Common myeloid progenitor, CD34-positive (primary cell): ENCODE measurements at regions of chr19 and their contacts with region 1.

Region 1: GRCh38 chr19:58519355-58520256 is at the start of gene ZBTB45:
- DNase-seq: peak; percentile 97
- H3K4me3 ChIP-seq: peak within 1 kb of the TSS; percentile 77 to 94 (median 83)
- H3K27ac ChIP-seq: peak within 1 kb of the TSS; percentile 82 to 91
- H3K4me1 ChIP-seq: peaks cover 0 to 35% (median 31%) of the 10 kb centered on the region in 4 experiments
- H3K27me3 ChIP-seq: no peaks in the 10 kb centered on the region

Region 2: GRCh38 chr19:58536852-58537798 is 17.5 kb after region 1 on chr19:
- CTCF ChIA-PET with region 1: interaction called, 41 read pairs
- POLR2A ChIA-PET with region 1: interaction called, 6 read pairs
- DNase-seq: no peak
- H3K4me3 ChIP-seq: peak overlapping the region in 1 of 7 experiments; percentile 77
- H3K27ac ChIP-seq: no peak overlapping the region
- H3K4me1 ChIP-seq: peaks cover 0 to 19% (median 16%) of the 10 kb centered on the region in 4 experiments
- H3K27me3 ChIP-seq: no peaks in the 10 kb centered on the region

Region 3: GRCh38 chr19:58543826-58544590 is 24.4 kb after region 1 on chr19 and contains the start of gene TRIM28:
- CTCF ChIA-PET with region 1: interaction called, 19 read pairs
- POLR2A ChIA-PET with region 1: interaction called, 16 read pairs
- DNase-seq: peak; percentile 99 to 100 (median 100)
- H3K4me3 ChIP-seq: peak within 1 kb of the TSS; percentile 88 to 99 (median 92)
- H3K27ac ChIP-seq: peak within 1 kb of the TSS; percentile 66 to 91
- H3K4me1 ChIP-seq: peaks cover 13 to 29% (median 24%) of the 10 kb centered on the region in 4 experiments
- H3K27me3 ChIP-seq: no peaks in the 10 kb centered on the region

Region 4: DNA sequence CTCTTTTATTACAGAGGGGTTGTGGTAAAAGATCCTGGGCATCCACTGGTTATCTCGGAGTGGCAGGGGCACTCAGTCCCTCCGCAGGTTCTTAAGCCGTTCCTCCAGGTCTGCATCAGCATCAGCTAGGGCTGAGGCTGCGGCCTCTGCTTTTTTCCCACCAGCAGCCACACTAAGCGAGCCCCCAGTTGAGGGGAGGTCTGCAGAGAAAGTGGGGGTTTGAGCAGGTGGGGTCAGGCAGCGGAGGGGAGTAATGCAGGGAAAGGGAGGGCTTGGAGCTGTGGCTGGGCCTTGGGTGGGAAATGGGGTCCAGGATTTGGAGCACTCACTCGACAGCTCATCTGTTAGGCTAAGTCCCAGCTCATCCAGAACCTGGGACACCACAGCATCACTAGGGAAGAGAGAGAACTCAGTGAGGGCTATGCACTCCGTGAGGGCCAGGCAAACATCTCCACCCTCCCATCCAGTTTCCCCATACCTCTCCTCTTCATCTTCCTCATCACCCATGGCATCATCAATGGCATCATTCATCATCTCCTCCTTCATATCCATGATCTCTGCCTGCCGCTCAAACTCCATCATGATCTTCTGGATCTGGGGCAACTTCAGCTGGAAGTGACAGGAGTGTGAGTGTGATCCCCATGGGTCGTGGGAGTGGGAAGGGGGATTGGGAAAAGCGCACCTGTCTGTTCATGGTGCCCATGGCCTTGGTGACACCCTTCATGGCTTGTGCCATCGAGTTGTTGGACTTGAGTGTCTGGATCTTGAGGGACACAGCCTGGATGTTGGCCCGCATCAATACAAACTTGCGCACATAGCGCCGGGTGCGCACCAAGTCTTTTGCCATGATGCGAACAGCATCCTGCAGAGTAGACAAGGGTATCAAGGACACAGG is 32.2 kb after region 1 on chr19:
- CTCF ChIA-PET with region 1: interaction called, 59 read pairs
- POLR2A ChIA-PET with region 1: interaction called, 24 read pairs
- DNase-seq: no peak
- H3K4me3 ChIP-seq: no peak overlapping the region
- H3K27ac ChIP-seq: no peak overlapping the region
- H3K4me1 ChIP-seq: peaks cover 2 to 35% (median 33%) of the 10 kb centered on the region in 4 experiments
- H3K27me3 ChIP-seq: no peaks in the 10 kb centered on the region

Region 5: GRCh38 chr19:58558623-58559274 is 39.1 kb after region 1 on chr19:
- CTCF ChIA-PET with region 1: interaction called, 59 read pairs
- POLR2A ChIA-PET with region 1: interaction called, 24 read pairs
- DNase-seq: peak; percentile 98 to 99 (median 99)
- H3K4me3 ChIP-seq: peak overlapping the region; percentile 57 to 94 (median 84)
- H3K27ac ChIP-seq: peak overlapping the region; percentile 91 to 97
- H3K4me1 ChIP-seq: peaks cover 5 to 76% (median 69%) of the 10 kb centered on the region in 4 experiments
- H3K27me3 ChIP-seq: peaks cover 0 to 12% (median 0%) of the 10 kb centered on the region in 5 experiments

Region 6: GRCh38 chr19:58575183-58576064 is 55.8 kb after region 1 on chr19:
- CTCF ChIA-PET with region 1: interaction called, 139 read pairs
- POLR2A ChIA-PET with region 1: interaction called, 11 read pairs
- DNase-seq: peak; percentile 92 to 95 (median 94)
- H3K4me3 ChIP-seq: peak overlapping the region; percentile 39 to 86 (median 74)
- H3K27ac ChIP-seq: peak overlapping the region; percentile 94 to 95
- H3K4me1 ChIP-seq: peaks cover 8 to 32% (median 30%) of the 10 kb centered on the region in 4 experiments
- H3K27me3 ChIP-seq: no peaks in the 10 kb centered on the region

Region 7: GRCh38 chr19:58581227-58582151 is 61.9 kb after region 1 on chr19:
- CTCF ChIA-PET with region 1: interaction called, 139 read pairs
- POLR2A ChIA-PET with region 1: interaction called, 11 read pairs
- DNase-seq: peak; percentile 89 to 95 (median 93)
- H3K4me3 ChIP-seq: no peak overlapping the region
- H3K27ac ChIP-seq: peak overlapping the region in 1 of 2 experiments; percentile 25
- H3K4me1 ChIP-seq: peaks cover 0 to 4% (median 2%) of the 10 kb centered on the region in 4 experiments
- H3K27me3 ChIP-seq: no peaks in the 10 kb centered on the region